Activated CD4-positive, alpha-beta memory T cell treated with anti-CD3 and anti-CD28 coated beads for 36 hours (primary cell): ENCODE measurements at regions of chr10 and their contacts with region 1.

Region 1: DNA sequence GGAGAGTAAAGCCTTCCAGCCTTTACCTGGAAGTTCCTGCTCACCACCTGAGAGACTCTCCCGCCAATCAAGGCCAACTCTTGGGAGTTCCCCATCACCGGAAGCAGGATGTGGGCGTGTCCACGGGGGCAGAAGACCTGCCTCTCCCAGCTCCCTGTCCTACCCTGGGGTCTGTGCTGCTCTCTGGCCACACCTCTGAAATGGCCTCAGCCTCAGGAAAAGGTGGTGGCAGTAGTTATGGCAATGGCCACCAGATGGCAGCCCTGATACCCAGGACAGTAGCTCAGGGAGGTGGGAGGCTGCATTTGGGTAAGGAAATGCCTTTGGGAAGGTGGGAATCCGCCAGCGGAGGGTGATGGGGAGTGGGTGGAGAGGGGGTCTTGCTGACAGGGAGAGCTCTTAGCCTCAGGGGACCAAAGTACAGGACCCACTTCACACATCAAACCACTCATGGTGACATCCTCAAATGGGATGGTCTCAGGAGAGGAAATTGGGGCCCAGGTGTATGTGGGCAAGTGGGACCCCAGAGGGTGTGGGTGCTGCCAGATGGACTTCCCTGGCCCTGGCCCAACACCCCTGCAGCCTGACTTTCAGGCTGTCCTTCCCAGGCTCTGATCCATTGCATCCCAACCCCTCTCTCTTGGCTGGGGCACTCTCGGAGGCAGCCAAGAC is 33.9 kb downstream of the KAZALD1 start:
- DNase-seq: peak; percentile 85
- H3K4me3 Mint-ChIP-seq: no peak overlapping the region
- H3K27ac Mint-ChIP-seq: no peak overlapping the region
- H3K4me1 Mint-ChIP-seq: no peaks in the 10 kb centered on the region
- H3K27me3 Mint-ChIP-seq: peaks cover 33% of the 10 kb centered on the region

Region 2: GRCh38 chr10:99667108-99667751 is 1428.4 kb before region 1 on chr10:
- CTCF ChIA-PET with region 1: no interaction called
- POLR2A ChIA-PET with region 1: no interaction called
- intact Hi-C with region 1: no loop called
- DNase-seq: no peak
- H3K4me3 Mint-ChIP-seq: no peak overlapping the region
- H3K27ac Mint-ChIP-seq: no peak overlapping the region
- H3K4me1 Mint-ChIP-seq: no peaks in the 10 kb centered on the region
- H3K27me3 Mint-ChIP-seq: no peaks in the 10 kb centered on the region

Region 3: GRCh38 chr10:100223879-100224278 is 871.8 kb before region 1 on chr10:
- CTCF ChIA-PET with region 1: no interaction called
- POLR2A ChIA-PET with region 1: no interaction called
- intact Hi-C with region 1: no loop called
- DNase-seq: no peak
- H3K4me3 Mint-ChIP-seq: no peak overlapping the region
- H3K27ac Mint-ChIP-seq: no peak overlapping the region
- H3K4me1 Mint-ChIP-seq: peaks cover 16% of the 10 kb centered on the region
- H3K27me3 Mint-ChIP-seq: no peaks in the 10 kb centered on the region

Region 4: DNA sequence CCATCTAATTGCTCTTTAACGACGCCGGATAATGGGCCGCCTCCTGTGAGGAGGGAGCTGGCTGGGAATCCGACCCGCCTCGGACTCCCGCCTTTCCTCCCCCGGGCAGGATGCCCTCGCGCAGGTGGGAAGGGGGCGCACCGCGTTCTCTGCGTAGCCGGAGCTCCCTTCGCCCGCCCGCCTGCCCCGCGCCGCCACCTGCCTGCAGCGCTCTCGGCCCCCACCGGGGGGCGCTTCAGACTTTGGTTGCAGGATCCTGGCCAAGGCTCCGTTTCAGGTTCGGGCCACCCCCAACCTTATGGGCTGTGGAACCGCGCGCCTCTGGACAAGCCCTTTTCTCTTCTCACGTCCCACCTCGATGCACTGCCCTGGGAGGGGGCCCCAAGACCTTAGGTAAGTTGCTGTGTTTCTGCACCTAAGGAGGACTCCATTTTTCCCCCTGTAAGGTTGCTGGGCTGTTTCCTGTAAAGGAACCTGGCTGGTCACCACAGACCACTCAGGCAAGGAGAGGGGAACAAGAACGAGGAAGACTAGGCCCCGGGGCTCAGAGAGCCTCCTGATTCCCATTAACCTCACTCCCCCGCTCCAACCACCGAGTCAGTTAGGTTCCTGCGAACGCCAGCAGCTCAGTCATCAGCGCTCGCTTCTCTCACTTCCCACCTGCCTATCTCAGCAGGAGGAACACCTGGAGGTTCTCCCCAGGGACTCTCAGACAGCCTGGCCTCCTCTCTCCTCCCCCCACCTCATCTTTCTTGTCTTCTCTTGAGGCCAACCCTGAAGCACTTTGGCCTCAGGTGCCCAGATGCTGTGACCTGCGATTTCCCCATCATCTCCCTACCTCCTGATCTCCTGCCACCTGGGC is 45.2 kb before region 1 on chr10:
- CTCF ChIA-PET with region 1: interaction called, 16 read pairs
- POLR2A ChIA-PET with region 1: no interaction called
- intact Hi-C with region 1: no loop called
- DNase-seq: peak; percentile 84
- H3K4me3 Mint-ChIP-seq: no peak overlapping the region
- H3K27ac Mint-ChIP-seq: no peak overlapping the region
- H3K4me1 Mint-ChIP-seq: peaks cover 15% of the 10 kb centered on the region
- H3K27me3 Mint-ChIP-seq: peaks cover 47% of the 10 kb centered on the region

Region 5: GRCh38 chr10:101075775-101076174 is 19.9 kb before region 1 on chr10:
- CTCF ChIA-PET with region 1: interaction called, 11 read pairs
- POLR2A ChIA-PET with region 1: no interaction called
- intact Hi-C with region 1: no loop called
- DNase-seq: no peak
- H3K4me3 Mint-ChIP-seq: no peak overlapping the region
- H3K27ac Mint-ChIP-seq: no peak overlapping the region
- H3K4me1 Mint-ChIP-seq: peaks cover 6% of the 10 kb centered on the region
- H3K27me3 Mint-ChIP-seq: peaks cover 47% of the 10 kb centered on the region

Region 6: GRCh38 chr10:101107771-101108170 is 12.1 kb after region 1 on chr10:
- CTCF ChIA-PET with region 1: interaction called, 22 read pairs
- POLR2A ChIA-PET with region 1: no interaction called
- intact Hi-C with region 1: no loop called
- DNase-seq: no peak
- H3K4me3 Mint-ChIP-seq: no peak overlapping the region
- H3K27ac Mint-ChIP-seq: no peak overlapping the region
- H3K4me1 Mint-ChIP-seq: no peaks in the 10 kb centered on the region
- H3K27me3 Mint-ChIP-seq: peaks cover 16% of the 10 kb centered on the region

Region 7: DNA sequence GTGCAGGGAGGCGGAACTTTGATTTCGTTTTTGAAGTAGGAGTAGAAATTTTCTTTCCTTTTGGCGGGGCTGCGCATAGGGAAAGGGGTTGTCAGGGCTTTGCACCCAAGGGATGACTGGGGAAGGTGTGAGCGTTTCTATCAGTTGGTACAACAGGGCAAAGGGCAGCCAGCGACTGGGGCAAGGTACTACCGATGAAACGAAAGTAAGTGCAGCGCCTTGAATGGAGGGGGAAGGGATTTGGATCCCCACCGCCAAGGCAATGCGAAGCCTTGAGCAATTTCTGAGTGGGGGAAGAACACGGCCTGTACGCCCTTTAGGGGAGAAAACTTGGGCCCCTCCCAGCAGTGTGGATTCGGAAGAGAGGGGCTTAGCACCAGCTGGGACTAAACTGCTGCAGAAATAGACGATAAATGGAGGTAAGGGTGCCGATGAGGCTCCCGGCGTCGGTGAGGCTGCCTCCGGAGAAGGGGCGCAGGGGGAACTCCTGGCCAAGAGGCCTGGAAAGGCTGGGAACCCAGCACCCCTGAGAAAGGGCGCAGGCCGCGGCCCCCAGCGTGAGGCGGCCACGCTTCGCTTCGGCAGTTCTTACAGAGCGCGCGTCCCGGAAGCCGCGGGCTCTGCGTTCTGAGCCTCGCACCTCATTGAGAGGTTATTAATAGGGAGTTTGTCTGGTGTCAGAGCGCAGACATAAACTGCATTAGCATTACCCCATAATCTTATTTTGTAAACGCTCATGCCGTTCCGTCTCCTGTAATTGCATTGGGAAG is 25.4 kb after region 1 on chr10:
- CTCF ChIA-PET with region 1: interaction called, 13 read pairs
- POLR2A ChIA-PET with region 1: no interaction called
- intact Hi-C with region 1: no loop called
- DNase-seq: peak; percentile 55
- H3K4me3 Mint-ChIP-seq: peak overlapping the region; percentile 84
- H3K27ac Mint-ChIP-seq: no peak overlapping the region
- H3K4me1 Mint-ChIP-seq: peaks cover 31% of the 10 kb centered on the region
- H3K27me3 Mint-ChIP-seq: peaks cover 51% of the 10 kb centered on the region

Region 8: GRCh38 chr10:101130984-101131961 is 35.6 kb after region 1 on chr10 and contains the start of gene TLX1:
- CTCF ChIA-PET with region 1: interaction called, 668 read pairs
- POLR2A ChIA-PET with region 1: no interaction called
- intact Hi-C with region 1: no loop called
- DNase-seq: no peak
- H3K4me3 Mint-ChIP-seq: no peak within 1 kb of the TSS
- H3K27ac Mint-ChIP-seq: no peak within 1 kb of the TSS
- H3K4me1 Mint-ChIP-seq: peaks cover 29% of the 10 kb centered on the region
- H3K27me3 Mint-ChIP-seq: peaks cover 76% of the 10 kb centered on the region
- total RNA-seq, gene TLX1: not detected

Region 9: DNA sequence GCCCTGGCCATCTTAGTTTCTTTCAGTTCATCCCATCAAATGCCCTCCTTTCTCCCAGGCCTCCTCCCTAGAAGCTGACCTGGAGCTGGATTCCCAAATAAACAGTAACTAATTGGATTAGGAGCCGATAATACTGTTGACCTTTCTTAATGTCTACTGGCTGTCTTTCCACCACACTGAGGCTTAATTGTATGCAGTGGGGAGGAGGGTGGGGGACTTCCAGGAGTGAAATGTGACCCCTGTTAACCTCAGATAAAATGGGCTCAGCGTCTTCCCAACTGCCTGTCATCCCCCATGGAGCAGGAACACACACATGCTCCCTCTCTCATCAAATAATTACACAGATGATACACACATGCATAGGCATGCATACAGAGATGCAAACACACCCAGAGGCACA is 187.3 kb after region 1 on chr10:
- CTCF ChIA-PET with region 1: no interaction called
- POLR2A ChIA-PET with region 1: no interaction called
- intact Hi-C with region 1: no loop called
- DNase-seq: no peak
- H3K4me3 Mint-ChIP-seq: no peak overlapping the region
- H3K27ac Mint-ChIP-seq: no peak overlapping the region
- H3K4me1 Mint-ChIP-seq: peaks cover 5% of the 10 kb centered on the region
- H3K27me3 Mint-ChIP-seq: peaks cover 50% of the 10 kb centered on the region